IMR-90 (cell line): ENCODE measurements at regions of chr3 and their contacts with region 1.

Region 1: GRCh38 chr3:179713643-179714090 is 60.8 kb downstream of the USP13 start:
- DNase-seq: peak; percentile 92
- ATAC-seq: peak; percentile 76
- H3K4me3 ChIP-seq: no peak overlapping the region
- H3K27ac ChIP-seq: peak overlapping the region; percentile 98; the same call in 1 of the 2 replicates
- H3K4me1 ChIP-seq: peaks cover 20% of the 10 kb centered on the region
- H3K27me3 ChIP-seq: no peaks in the 10 kb centered on the region
- CTCF ChIP-seq: no peak
- POLR2A ChIP-seq: no peak; the same call in 1 of the 2 replicates
- RAD21 ChIP-seq: no peak

Region 2: DNA sequence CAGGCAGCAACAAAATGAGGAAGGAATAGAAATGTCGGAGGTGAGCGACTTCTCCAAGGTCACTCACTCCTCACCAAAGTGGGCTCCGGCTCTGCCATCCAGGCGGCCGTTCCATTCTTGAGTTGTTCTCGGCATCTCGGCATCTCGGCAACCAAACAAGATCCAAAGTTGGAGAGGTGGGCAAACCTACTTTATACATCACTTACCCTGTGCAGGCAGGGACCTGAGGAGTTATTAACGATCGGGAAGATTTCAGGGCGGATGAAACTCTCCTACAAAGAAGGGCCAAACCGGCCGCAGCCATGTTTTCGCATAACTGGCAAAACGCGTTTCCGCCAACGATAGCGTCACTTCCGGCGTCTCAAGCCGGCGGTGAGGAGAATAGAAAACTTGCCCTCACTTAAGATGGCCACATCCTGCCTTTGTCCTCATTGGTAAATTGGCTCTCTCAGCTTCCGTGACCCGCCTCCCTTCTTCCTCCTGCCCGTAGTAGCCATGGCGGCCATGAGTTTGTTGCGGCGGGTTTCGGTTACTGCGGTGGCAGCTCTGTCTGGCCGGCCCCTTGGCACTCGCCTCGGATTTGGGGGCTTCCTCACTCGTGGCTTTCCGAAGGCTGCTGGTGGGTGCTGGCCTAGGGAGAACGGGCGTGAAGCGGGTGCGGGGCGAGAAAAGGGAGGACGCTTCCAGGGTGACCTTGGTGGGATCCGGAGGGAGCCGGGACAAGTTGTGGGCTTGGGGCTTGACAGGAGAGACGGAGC is 109.2 kb before region 1 on chr3 and contains the starts of genes MRPL47 and NDUFB5:
- CTCF ChIA-PET with region 1: no interaction called
- POLR2A ChIA-PET with region 1: no interaction called
- dilution Hi-C with region 1: no loop called
- in situ Hi-C with region 1: no loop called
- intact Hi-C with region 1: loop called (anchors 1 kb)
- DNase-seq: peak; percentile 97
- ATAC-seq: peak; percentile 100
- H3K4me3 ChIP-seq: peak within 1 kb of the TSS; percentile 85
- H3K27ac ChIP-seq: peak within 1 kb of the TSS; percentile 92
- H3K4me1 ChIP-seq: no peaks in the 10 kb centered on the region; the same call in 1 of the 2 replicates
- H3K27me3 ChIP-seq: no peaks in the 10 kb centered on the region
- CTCF ChIP-seq: no peak
- POLR2A ChIP-seq: peak; percentile 93
- RAD21 ChIP-seq: no peak
- total RNA-seq, gene MRPL47: 41.4 and 47.2 TPM in 2 replicates
- total RNA-seq, gene NDUFB5: 17.2 and 40.0 TPM in 2 replicates

Region 3: DNA sequence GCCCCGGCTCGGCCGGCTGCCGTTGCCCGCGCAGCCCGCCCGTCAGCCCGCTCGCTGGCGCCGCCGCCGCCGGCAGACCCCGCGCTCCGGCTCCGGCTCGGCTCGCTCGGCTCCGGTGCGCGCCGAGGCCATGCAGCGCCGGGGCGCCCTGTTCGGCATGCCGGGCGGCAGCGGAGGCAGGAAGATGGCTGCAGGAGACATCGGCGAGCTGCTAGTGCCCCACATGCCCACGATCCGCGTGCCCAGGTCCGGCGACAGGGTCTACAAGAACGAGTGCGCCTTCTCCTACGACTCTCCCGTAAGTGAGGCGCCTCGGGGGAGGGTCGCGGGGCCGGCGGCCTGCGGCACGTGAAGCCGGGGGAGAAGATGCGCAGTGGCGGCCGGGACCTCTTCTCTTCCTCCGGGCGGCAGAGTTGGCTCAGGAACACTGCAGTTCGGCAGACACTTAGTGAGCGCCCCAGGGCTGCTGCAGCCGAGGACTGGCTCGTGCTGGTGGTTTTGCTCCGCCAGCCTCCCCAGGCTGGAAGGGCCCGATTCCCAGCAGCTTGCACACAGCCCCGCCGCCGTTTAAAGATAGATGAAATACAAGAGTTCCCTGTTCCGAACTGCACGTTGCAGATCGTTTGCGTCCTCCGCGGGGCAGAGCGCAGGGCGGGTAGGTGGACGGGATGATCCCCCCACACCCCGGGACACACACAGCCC is 60.4 kb before region 1 on chr3:
- CTCF ChIA-PET with region 1: no interaction called
- POLR2A ChIA-PET with region 1: interaction called, 4 read pairs
- dilution Hi-C with region 1: no loop called
- in situ Hi-C with region 1: no loop called
- intact Hi-C with region 1: loop called (anchors 5 kb)
- DNase-seq: peak; percentile 82
- ATAC-seq: peak; percentile 73
- H3K4me3 ChIP-seq: peak overlapping the region; percentile 94
- H3K27ac ChIP-seq: peak overlapping the region; percentile 91
- H3K4me1 ChIP-seq: no peaks in the 10 kb centered on the region
- H3K27me3 ChIP-seq: no peaks in the 10 kb centered on the region
- CTCF ChIP-seq: peak; percentile 24; the same call in 1 of the 2 replicates
- POLR2A ChIP-seq: no peak; the same call in 1 of the 2 replicates
- RAD21 ChIP-seq: peak; percentile 35; the same call in 1 of the 2 replicates

Region 4: DNA sequence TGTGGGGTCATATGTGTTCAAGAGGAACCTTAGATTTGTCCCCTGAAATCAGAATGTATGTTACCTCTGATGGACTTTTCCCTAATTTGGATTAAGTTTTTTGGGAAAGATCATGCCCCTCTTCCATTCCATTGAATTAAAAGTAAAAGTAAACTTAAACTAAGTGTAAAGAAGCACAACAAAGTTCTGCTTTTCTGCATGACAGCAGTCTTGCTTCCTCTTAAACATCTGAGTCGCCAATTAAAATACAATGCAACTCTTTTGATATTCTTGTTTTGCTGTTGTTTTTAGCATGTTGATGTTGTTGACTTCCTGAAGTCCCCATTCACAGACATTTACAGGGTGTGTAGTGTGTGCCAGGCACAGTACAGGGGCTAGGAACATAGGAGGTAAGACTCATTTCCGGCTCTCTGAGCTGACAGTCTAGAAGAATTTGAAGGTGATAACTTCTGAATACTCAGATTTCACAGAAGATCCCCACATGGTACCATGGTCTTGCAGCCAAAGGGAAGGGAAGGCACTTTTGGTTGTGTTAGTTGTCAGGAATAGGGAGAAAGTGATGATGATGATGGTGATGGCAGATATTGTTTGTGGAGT is 15.8 kb before region 1 on chr3:
- CTCF ChIA-PET with region 1: no interaction called
- POLR2A ChIA-PET with region 1: no interaction called
- dilution Hi-C with region 1: no loop called
- in situ Hi-C with region 1: no loop called
- intact Hi-C with region 1: no loop called
- DNase-seq: no peak
- ATAC-seq: no peak
- H3K4me3 ChIP-seq: no peak overlapping the region
- H3K27ac ChIP-seq: no peak overlapping the region
- H3K4me1 ChIP-seq: no peaks in the 10 kb centered on the region
- H3K27me3 ChIP-seq: no peaks in the 10 kb centered on the region
- CTCF ChIP-seq: no peak
- POLR2A ChIP-seq: no peak
- RAD21 ChIP-seq: no peak

Region 5: GRCh38 chr3:179884136-179884535 is 170.5 kb after region 1 on chr3:
- CTCF ChIA-PET with region 1: no interaction called
- POLR2A ChIA-PET with region 1: no interaction called
- dilution Hi-C with region 1: no loop called
- in situ Hi-C with region 1: no loop called
- intact Hi-C with region 1: no loop called
- DNase-seq: no peak
- ATAC-seq: no peak
- H3K4me3 ChIP-seq: no peak overlapping the region
- H3K27ac ChIP-seq: no peak overlapping the region
- H3K4me1 ChIP-seq: no peaks in the 10 kb centered on the region
- H3K27me3 ChIP-seq: no peaks in the 10 kb centered on the region; the same call in 1 of the 2 replicates
- CTCF ChIP-seq: no peak
- POLR2A ChIP-seq: no peak
- RAD21 ChIP-seq: no peak

Region 6: GRCh38 chr3:180433152-180433551 is 719.5 kb after region 1 on chr3:
- CTCF ChIA-PET with region 1: no interaction called
- POLR2A ChIA-PET with region 1: no interaction called
- dilution Hi-C with region 1: no loop called
- in situ Hi-C with region 1: no loop called
- intact Hi-C with region 1: no loop called
- DNase-seq: peak; percentile 81
- ATAC-seq: peak; percentile 81
- H3K4me3 ChIP-seq: no peak overlapping the region
- H3K27ac ChIP-seq: no peak overlapping the region
- H3K4me1 ChIP-seq: 0 out of 2 replicates have a peak, but pooled peaks cover 1% of the 10 kb centered on the region
- H3K27me3 ChIP-seq: no peaks in the 10 kb centered on the region
- CTCF ChIP-seq: no peak
- POLR2A ChIP-seq: no peak
- RAD21 ChIP-seq: no peak